Activated naive CD4-positive, alpha-beta T cell treated with anti-CD3 and anti-CD28 coated beads for 36 hours (primary cell): ENCODE measurements at regions of chr15 and their contacts with region 1.

Region 1: DNA sequence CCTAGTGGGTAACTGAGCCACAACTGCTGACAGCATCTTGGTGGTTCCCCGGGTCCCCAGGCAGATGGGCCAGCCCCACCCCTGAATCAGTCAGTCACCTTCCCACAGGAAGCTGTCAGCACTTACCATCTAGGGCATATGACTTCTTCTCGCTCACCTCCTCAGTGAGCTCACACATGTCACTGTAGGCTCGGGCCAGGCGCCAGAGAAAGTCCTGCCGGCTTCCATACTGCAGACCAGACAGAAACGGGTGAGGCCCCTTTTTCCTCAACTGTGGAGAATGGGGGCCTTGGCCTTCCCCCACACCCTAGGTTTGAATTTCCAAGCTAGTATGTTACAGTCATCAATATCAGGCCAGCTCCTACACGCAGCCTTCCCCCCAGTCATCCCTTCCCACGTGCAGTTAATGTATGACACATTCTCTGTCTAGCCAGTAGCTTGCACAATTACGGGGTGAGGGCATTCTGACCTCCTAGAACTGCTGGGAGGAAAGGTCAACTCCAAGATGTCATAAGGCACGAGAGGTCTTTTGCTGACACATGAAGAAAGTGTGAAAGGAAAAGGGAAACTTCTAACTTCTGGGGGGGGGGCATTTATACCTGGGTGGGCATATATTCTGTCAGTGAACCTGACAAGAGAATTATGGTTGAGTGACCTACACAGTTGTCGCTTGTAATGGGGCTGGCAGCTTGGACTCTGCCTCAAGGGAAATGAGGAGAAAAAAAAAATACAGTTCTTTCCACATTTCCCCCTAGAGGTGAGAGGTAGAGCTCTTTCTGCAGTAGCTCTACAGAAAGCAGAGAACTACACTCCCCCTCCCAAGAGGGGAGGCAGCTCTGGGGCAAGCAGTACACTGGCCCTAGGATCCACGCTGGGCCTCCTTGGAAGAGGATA is 10.9 kb downstream of the RMDN3 start:
- DNase-seq: peak; percentile 81
- H3K4me3 Mint-ChIP-seq: no peak overlapping the region
- H3K27ac Mint-ChIP-seq: peak overlapping the region; percentile 48
- H3K4me1 Mint-ChIP-seq: peaks cover 15% of the 10 kb centered on the region
- H3K27me3 Mint-ChIP-seq: no peaks in the 10 kb centered on the region

Region 2: GRCh38 chr15:40754883-40755811 is 11.0 kb after region 1 on chr15 and contains the start of gene RMDN3:
- CTCF ChIA-PET with region 1: no interaction called
- intact Hi-C with region 1: loop called (anchors 1 kb)
- DNase-seq: peak; percentile 95
- H3K4me3 Mint-ChIP-seq: peak within 1 kb of the TSS; percentile 94
- H3K27ac Mint-ChIP-seq: peak within 1 kb of the TSS; percentile 98
- H3K4me1 Mint-ChIP-seq: peaks cover 25% of the 10 kb centered on the region
- H3K27me3 Mint-ChIP-seq: no peaks in the 10 kb centered on the region
- total RNA-seq, gene RMDN3: 17.8 to 19.2 TPM